Heart right ventricle (tissue), 16 donors: ENCODE measurements at regions of chr2 and their contacts with region 1.

Region 1: DNA sequence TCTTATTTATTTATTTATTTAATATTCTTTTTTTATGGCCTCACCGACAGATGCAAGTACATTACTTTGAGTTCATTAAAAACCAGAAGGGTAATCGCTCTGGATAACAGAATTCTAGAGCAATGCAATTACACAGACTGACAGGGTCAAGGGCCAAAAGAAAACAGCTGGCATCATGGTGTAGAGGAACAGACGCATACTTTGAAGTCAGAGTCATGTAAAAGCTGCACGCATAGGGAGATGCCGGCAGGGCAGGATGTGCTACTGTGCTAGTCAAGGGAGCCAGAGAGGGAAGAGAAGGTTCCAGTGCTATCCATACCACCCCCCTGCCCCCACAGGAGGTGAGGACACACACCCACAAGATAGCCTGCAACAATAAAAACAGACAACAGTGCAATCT is 115.2 kb upstream of the TFCP2L1 start:
- DNase-seq: no peak
- ATAC-seq: no peak
- H3K4me3 ChIP-seq: no peak overlapping the region
- H3K27ac ChIP-seq: no peak overlapping the region
- H3K4me1 ChIP-seq: no peaks in the 10 kb centered on the region
- H3K27me3 ChIP-seq: no peaks in the 10 kb centered on the region
- CTCF ChIP-seq: no peak

Region 2: DNA sequence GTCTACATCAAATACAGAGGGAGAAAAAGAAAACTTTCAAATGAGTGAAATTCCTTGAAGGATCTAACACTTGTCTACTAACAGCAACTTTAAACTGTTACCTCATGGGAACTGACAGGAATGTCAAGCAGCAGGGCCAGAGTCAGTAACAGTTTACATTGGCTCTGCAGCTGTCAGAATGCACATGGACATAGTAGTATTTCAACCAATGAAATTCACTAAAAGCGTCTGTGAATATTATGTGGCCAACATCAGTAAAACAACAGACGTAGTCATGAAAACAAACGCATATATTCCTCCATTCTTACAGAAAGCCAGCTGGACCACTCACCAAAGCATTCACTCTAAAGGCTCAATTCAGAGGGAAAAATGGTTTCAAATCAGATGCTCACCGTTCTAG is 51.2 kb after region 1 on chr2:
- intact Hi-C with region 1: loop called in 1 of 10 experiments (anchors 10 kb)
- DNase-seq: no peak
- ATAC-seq: no peak
- H3K4me3 ChIP-seq: no peak overlapping the region
- H3K27ac ChIP-seq: no peak overlapping the region
- H3K4me1 ChIP-seq: no peaks in the 10 kb centered on the region
- H3K27me3 ChIP-seq: no peaks in the 10 kb centered on the region
- CTCF ChIP-seq: no peak

Region 3: GRCh38 chr2:121505005-121505404 is 104.8 kb after region 1 on chr2:
- intact Hi-C with region 1: loop called in 2 of 10 experiments (anchors 10 kb)
- DNase-seq: no peak
- ATAC-seq: peak in 2 of 8 donors; percentile 46 to 48
- H3K4me3 ChIP-seq: no peak overlapping the region
- H3K27ac ChIP-seq: no peak overlapping the region
- H3K4me1 ChIP-seq: peaks cover 0 to 35% (median 17%) of the 10 kb centered on the region in 9 donors
- H3K27me3 ChIP-seq: no peaks in the 10 kb centered on the region
- CTCF ChIP-seq: no peak

Region 4: DNA sequence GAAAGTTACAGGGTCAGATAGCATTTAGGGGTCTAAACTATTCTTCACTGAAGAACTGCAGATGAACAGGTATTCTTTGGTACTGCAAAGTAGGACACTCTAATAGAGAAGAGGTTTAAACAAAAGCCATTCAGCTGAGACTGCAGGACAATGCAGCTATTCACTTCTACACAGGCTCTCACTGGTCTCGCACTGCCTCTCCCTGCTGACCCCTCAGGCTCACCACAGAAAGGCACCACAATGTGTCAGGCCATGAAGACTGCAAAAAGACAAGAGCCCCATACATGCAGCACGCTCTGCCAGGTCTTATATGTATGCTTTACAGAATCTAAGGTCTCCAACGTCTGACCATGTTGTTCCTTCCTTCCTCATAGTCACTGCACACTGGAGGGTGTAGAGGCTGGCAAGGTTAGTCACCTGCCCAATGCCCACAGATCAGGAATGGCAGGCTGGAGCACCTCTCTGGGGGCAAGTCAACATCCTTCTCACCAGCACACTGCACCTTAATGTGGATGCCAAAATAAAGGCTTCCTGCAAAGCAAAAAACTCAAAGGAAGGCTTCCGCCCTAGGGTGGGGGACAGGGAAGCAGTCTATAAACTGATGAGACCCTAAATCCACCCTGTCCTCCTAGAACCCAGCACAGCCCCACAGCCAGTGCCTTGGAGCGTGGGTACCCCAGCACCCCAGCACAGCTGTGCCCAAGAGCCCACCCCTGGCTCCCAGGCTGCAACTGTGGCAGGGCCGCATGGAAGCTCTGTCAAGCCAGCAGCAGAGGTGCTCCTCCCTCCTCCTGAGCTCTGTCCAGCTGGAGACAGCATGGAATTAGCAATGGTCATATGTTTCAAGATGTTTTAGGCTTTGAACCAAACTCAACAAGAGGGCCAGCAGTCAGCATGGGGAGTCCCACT is 119.8 kb after region 1 on chr2:
- intact Hi-C with region 1: loop called in 2 of 10 experiments (anchors 10 kb)
- DNase-seq: no peak
- ATAC-seq: peak in 6 of 8 donors; percentile 38 to 78 (median 45)
- H3K4me3 ChIP-seq: no peak overlapping the region
- H3K27ac ChIP-seq: peak overlapping the region in 1 of 10 donors; percentile 13
- H3K4me1 ChIP-seq: peaks cover 0 to 26% (median 20%) of the 10 kb centered on the region in 9 donors
- H3K27me3 ChIP-seq: no peaks in the 10 kb centered on the region
- CTCF ChIP-seq: no peak

Region 5: DNA sequence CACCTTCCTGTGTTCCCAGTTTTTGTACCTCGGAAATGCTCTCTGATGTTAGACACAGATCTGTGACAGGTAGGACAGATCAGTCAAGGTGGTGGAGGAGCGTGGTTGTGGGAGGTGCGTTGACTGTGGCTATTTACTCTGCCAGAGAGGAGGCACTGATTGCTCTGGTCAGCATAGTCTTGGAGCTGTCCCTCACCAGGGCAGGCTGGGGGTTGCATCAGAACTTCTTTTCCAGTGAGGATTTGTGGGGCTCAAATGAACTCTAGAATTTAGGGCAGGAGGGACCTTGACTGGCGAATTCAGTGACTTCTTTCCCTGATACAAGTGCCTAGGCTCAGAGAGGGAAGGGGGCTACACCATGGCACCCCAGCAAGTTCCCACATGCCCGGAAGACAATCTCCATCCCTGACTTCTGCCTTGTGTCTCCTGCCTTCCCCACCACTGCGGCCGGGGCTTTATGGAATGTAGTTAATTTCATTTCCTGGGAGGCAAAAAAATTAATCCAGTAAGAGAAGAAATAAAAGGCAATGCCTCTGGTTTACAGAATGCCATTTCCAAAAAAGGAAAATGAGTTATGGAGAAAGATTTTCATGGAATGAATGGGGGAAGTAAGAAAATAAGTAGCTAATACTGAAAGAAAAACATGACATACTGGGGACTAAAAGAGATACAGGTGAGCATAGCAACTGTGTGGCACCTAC is 310.4 kb after region 1 on chr2:
- intact Hi-C with region 1: loop called in 3 of 10 experiments (anchors 5 to 10 kb)
- DNase-seq: no peak
- ATAC-seq: no peak
- H3K4me3 ChIP-seq: no peak overlapping the region
- H3K27ac ChIP-seq: no peak overlapping the region
- H3K4me1 ChIP-seq: peaks cover 0 to 1% (median 0%) of the 10 kb centered on the region in 9 donors
- H3K27me3 ChIP-seq: no peaks in the 10 kb centered on the region
- CTCF ChIP-seq: no peak

Region 6: DNA sequence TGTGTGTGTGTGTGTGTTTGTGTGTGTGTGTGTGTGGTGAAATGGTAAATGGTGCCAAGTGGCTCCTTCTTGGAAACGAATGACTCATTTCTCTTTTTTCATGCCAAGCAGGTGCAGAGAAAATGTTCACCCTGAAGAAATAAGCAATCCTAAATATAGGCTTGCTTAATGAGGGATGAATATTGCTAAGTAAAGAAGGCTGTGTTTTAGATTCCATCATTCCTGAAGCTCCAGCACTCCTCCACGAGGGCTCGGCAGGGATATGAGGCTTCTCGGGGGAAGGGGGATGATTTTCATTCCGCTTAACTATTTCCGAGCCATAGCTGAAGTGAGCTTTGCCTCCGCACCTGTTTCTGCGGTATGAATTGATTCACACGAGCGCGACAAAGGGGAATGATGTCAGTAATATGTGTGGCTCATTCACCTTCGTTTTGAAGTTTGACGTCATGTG is 428.1 kb after region 1 on chr2:
- intact Hi-C with region 1: no loop called
- DNase-seq: no peak
- ATAC-seq: no peak
- H3K4me3 ChIP-seq: no peak overlapping the region
- H3K27ac ChIP-seq: no peak overlapping the region
- H3K4me1 ChIP-seq: no peaks in the 10 kb centered on the region
- H3K27me3 ChIP-seq: no peaks in the 10 kb centered on the region
- CTCF ChIP-seq: no peak